ENCODE measurements at regions of chr18 and their contacts with region 1.

Region 1: DNA sequence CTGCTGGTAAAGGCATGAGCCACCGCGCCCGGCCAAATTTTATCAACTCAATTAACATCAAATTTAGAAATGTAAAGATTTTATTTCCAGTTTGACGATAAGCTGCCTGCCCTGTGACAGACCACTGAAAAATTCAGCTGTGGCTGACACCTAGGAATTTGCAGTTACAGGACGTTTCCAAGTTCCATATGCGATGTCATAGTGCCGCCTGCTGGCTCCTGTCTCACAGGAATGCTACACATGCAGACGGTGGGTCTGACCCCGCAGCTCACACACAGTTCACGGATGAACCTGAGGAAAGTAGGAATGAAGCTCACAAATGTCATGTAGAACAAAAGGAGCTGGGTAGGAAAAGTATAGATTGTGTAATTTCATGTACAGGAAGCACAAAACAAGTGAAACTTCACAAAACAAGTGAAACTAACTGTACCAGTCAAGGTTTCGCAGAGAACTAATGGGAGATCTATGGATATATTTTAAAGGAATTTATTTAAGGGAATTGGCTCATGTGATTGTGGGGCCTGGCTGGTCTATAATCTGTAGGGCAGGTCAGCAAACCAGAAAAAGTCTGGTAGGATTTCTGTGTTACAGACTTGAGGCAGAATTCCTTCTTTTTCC is 13.2 kb upstream of the SEH1L start:
- DNase-seq: peak; percentile 85 to 91
- H3K4me3 ChIP-seq: no peak overlapping the region
- H3K27ac ChIP-seq: no peak overlapping the region
- H3K4me1 ChIP-seq: no peaks in the 10 kb centered on the region
- H3K27me3 ChIP-seq: no peaks in the 10 kb centered on the region
- CTCF ChIP-seq: peak; percentile 71 to 98 (median 86)
- POLR2A ChIP-seq: no peak

Region 2: GRCh38 chr18:12645254-12646203 is 289.0 kb before region 1 on chr18:
- intact Hi-C with region 1: no loop called
- DNase-seq: peak; percentile 79 to 84
- H3K4me3 ChIP-seq: no peak overlapping the region
- H3K27ac ChIP-seq: peak overlapping the region in 1 of 3 donors; percentile 47
- H3K4me1 ChIP-seq: peaks cover 11 to 15% of the 10 kb centered on the region in 2 donors
- H3K27me3 ChIP-seq: no peaks in the 10 kb centered on the region
- CTCF ChIP-seq: no peak
- POLR2A ChIP-seq: no peak

Region 3: GRCh38 chr18:12726774-12727550 is 207.6 kb before region 1 on chr18:
- intact Hi-C with region 1: loop called (anchors 2 kb)
- DNase-seq: peak; percentile 41 to 47
- H3K4me3 ChIP-seq: no peak overlapping the region
- H3K27ac ChIP-seq: no peak overlapping the region
- H3K4me1 ChIP-seq: no peaks in the 10 kb centered on the region
- H3K27me3 ChIP-seq: no peaks in the 10 kb centered on the region
- CTCF ChIP-seq: peak; percentile 76 to 94 (median 92)
- POLR2A ChIP-seq: no peak

Region 4: DNA sequence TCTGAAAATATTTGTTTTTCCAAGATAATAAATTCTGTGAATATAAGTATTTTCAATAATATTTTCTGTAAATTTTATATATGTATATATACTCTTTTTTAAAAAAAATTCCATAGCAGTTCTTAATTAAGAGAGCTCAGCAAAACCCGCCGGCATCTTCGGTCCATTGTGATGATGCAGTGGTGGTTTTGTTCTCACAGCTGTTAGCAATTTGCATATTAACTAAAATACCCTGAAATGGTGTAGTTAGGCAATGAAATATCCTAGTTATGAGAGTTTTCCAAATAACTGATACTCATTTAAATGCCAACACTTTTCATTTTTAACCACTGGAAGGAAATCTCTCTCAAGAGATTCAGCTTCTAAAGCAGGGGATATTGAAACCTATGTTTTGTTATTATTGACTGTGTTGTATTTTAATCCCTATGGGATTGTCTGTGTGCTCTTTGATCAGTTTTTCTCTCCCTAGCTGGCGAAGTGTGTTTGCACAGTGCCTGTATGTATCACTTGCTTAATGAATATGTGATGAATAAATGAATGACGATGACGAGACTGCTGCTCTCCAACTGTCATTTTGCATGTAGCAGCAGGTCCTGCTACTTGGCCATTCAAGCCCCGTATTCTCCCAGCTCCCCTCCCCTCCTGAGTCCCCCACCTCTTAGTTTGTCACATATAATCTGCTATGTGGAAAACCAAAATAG is 189.3 kb before region 1 on chr18:
- intact Hi-C with region 1: loop called (anchors 5 kb)
- DNase-seq: no peak
- H3K4me3 ChIP-seq: no peak overlapping the region
- H3K27ac ChIP-seq: no peak overlapping the region
- H3K4me1 ChIP-seq: no peaks in the 10 kb centered on the region
- H3K27me3 ChIP-seq: no peaks in the 10 kb centered on the region
- CTCF ChIP-seq: no peak
- POLR2A ChIP-seq: no peak

Region 5: DNA sequence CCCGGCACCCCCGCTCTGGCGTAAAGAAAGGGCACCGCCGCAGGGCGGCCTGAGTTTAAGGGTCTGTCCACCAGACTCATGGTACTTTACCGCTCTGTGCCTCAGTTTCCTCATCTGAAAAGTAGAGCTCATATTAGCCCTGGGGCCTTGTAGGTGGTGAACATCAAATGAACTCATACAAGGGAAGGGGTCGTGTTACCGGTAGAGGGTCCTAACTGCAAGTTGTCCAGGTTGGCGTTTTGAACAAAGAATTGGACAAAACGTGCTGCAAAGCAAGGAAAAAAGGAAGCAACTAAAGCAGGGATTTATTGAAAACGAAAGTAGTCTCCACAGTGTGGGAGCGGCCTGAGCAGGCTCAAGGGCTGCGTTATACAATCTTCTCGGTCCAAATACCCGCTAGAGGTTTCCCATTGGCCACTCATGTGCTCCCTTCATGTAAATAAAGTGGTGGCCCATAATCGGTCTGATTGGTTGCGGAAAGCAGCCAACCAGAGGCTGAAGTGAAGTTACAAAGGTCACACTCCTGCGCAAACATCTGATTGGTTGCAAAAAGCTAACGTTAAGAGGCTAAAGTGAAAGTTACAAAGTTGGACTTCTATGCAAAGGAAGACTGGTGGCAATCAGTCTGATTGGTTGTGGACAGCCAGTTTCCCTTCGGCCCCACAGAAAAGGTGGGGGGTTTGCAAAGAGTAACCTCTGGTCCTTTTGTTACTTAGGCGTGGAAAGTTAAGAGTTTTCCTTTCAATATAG is 203.3 kb after region 1 on chr18:
- intact Hi-C with region 1: no loop called
- DNase-seq: peak; percentile 39 to 42
- H3K4me3 ChIP-seq: peak overlapping the region; percentile 15 to 53 (median 52)
- H3K27ac ChIP-seq: peak overlapping the region in 2 of 3 donors; percentile 21 to 43
- H3K4me1 ChIP-seq: peaks cover 8 to 15% of the 10 kb centered on the region in 2 donors
- H3K27me3 ChIP-seq: no peaks in the 10 kb centered on the region
- CTCF ChIP-seq: no peak
- POLR2A ChIP-seq: no peak

Region 6: DNA sequence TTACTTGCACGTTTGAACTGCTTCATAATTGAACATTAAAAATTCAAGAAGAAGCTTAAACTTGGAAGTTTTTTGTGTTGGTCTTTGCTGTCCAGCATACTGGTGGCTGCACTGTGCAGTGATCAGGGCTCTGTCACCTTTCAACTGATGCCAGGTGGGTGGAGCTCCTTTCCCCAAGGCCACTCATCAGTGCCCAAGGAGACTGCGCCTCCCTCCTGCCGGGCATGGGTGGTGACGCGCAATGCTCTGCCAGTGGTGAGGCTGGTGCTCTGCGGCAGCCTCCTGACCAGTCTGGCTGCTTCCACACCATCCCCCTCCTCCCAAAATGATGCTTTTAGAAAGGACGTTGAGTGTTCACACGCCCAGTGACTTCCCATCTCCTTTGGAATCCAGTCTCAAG is 268.0 kb after region 1 on chr18:
- intact Hi-C with region 1: no loop called
- DNase-seq: no peak
- H3K4me3 ChIP-seq: no peak overlapping the region
- H3K27ac ChIP-seq: no peak overlapping the region
- H3K4me1 ChIP-seq: no peaks in the 10 kb centered on the region
- H3K27me3 ChIP-seq: no peaks in the 10 kb centered on the region
- CTCF ChIP-seq: no peak
- POLR2A ChIP-seq: no peak